Panc1 (cell line): ENCODE measurements at regions of chr1 and their contacts with region 1.

Region 1: GRCh38 chr1:211424018-211424417 is 67.9 kb downstream of the RD3 start:
- DNase-seq: no peak
- ATAC-seq: no peak
- H3K4me3 ChIP-seq: no peak overlapping the region
- H3K27ac ChIP-seq: no peak overlapping the region
- H3K4me1 ChIP-seq: peaks cover 3% of the 10 kb centered on the region; the same call in 1 of the 2 replicates
- H3K27me3 ChIP-seq: no peaks in the 10 kb centered on the region
- CTCF ChIP-seq: no peak

Region 2: DNA sequence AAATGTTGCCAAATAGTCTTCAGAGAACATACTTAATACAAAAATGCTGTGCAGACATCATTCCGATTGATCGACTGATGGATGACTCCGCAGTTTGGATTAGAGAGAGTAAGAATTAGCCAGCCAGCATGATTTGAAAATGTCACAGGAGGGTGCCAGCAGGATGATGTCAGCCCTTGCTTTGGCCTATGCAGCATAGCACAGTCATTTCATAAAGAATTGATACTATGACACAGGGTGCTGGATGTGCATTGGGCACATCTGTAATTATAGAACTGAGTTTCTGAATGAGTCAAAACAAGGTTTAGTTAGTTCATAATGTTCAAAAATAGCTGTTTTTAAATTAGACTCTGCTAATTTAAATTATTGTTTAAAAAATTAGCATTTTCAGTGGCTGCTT is 119.0 kb before region 1 on chr1:
- CTCF ChIA-PET with region 1: no interaction called
- POLR2A ChIA-PET with region 1: interaction called, 12 read pairs
- in situ Hi-C with region 1: no loop called
- intact Hi-C with region 1: no loop called
- DNase-seq: no peak
- ATAC-seq: no peak
- H3K4me3 ChIP-seq: no peak overlapping the region
- H3K27ac ChIP-seq: no peak overlapping the region
- H3K4me1 ChIP-seq: no peaks in the 10 kb centered on the region
- H3K27me3 ChIP-seq: no peaks in the 10 kb centered on the region
- CTCF ChIP-seq: no peak

Region 3: GRCh38 chr1:211320980-211321379 is 103.0 kb before region 1 on chr1:
- CTCF ChIA-PET with region 1: no interaction called
- POLR2A ChIA-PET with region 1: no interaction called
- in situ Hi-C with region 1: no loop called
- intact Hi-C with region 1: no loop called
- DNase-seq: no peak
- ATAC-seq: no peak
- H3K4me3 ChIP-seq: no peak overlapping the region
- H3K27ac ChIP-seq: no peak overlapping the region
- H3K4me1 ChIP-seq: no peaks in the 10 kb centered on the region
- H3K27me3 ChIP-seq: no peaks in the 10 kb centered on the region
- CTCF ChIP-seq: no peak

Region 4: DNA sequence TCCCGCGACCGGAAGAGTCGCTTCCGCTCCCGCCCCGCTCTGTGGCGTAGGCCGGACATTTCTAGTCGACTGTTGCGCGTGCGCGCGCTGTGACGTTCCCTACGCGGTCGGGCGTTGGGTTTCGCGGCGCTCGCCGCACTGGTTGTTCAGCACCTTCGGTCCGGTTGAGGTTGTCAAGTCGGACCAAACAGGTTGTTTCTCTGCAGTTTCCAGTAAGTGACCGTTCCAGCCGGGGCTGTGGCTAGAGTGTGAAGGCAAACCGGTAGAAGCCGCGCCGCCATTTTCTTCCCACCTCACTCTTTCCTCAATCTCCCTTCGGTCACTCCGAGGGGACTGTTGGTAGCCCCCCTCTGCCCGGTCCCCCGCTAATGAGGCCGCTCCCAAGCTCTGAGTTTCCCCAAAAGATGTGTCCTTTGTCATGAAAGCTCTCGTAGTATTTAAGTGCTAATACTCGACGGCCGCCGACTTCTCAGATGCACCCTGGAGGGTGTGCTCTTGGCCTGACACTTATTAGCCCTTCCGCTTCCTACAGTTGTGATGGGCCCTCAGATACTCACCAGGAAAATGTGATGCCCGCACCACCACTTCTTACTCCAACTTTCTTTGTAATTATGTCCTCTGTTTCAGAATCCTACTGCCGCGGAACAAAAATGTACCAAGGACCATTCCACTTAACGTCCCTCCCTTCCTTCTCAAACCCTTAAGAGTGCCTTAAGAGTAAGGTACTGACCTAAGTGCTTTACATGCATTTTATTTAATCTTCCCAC is 41.1 kb before region 1 on chr1:
- CTCF ChIA-PET with region 1: no interaction called
- POLR2A ChIA-PET with region 1: no interaction called
- in situ Hi-C with region 1: no loop called
- intact Hi-C with region 1: no loop called
- DNase-seq: peak; percentile 76
- ATAC-seq: peak; percentile 100
- H3K4me3 ChIP-seq: peak overlapping the region; percentile 76 to 81
- H3K27ac ChIP-seq: peak overlapping the region; percentile 96
- H3K4me1 ChIP-seq: 0 out of 2 replicates have a peak, but pooled peaks cover 6% of the 10 kb centered on the region
- H3K27me3 ChIP-seq: no peaks in the 10 kb centered on the region
- CTCF ChIP-seq: no peak

Region 5: GRCh38 chr1:211578640-211579433 is 154.8 kb after region 1 on chr1 and contains the start of gene SLC30A1:
- CTCF ChIA-PET with region 1: no interaction called
- POLR2A ChIA-PET with region 1: no interaction called
- in situ Hi-C with region 1: no loop called
- intact Hi-C with region 1: no loop called
- DNase-seq: peak; percentile 68
- ATAC-seq: peak; percentile 93
- H3K4me3 ChIP-seq: peak within 1 kb of the TSS; percentile 70 to 94
- H3K27ac ChIP-seq: peak within 1 kb of the TSS; percentile 83
- H3K4me1 ChIP-seq: peaks cover 28% of the 10 kb centered on the region
- H3K27me3 ChIP-seq: no peaks in the 10 kb centered on the region
- CTCF ChIP-seq: no peak
- total RNA-seq, gene SLC30A1: 34.5 TPM